ENCODE measurements at regions of chr16 and their contacts with region 1.

Region 1: GRCh38 chr16:3292604-3293003 is 9.3 kb downstream of the ZNF263 start:
- DNase-seq: no peak
- ATAC-seq: no peak
- H3K4me3 ChIP-seq: no peak overlapping the region
- H3K27ac ChIP-seq: no peak overlapping the region
- H3K4me1 ChIP-seq: no peaks in the 10 kb centered on the region
- H3K27me3 ChIP-seq: no peaks in the 10 kb centered on the region
- CTCF ChIP-seq: no peak

Region 2: GRCh38 chr16:3216263-3216640 is 76.4 kb before region 1 on chr16:
- CTCF ChIA-PET with region 1: interaction called, 12 read pairs
- POLR2A ChIA-PET with region 1: no interaction called
- in situ Hi-C with region 1: no loop called
- intact Hi-C with region 1: no loop called
- DNase-seq: no peak
- ATAC-seq: no peak
- H3K4me3 ChIP-seq: no peak overlapping the region
- H3K27ac ChIP-seq: no peak overlapping the region
- H3K4me1 ChIP-seq: no peaks in the 10 kb centered on the region
- H3K27me3 ChIP-seq: no peaks in the 10 kb centered on the region
- CTCF ChIP-seq: no peak

Measured in Panc1 (cell line).